B cell (primary cell): ENCODE measurements at regions of chr1 and their contacts with region 1.

Region 1: GRCh38 chr1:151281969-151282882 is at the start of gene ZNF687:
- DNase-seq: peak; percentile 99
- ATAC-seq: peak; percentile 86
- H3K4me3 ChIP-seq: peak within 1 kb of the TSS; percentile 91 to 100 (median 97)
- H3K4me3 Mint-ChIP-seq: peak within 1 kb of the TSS; percentile 98
- H3K27ac ChIP-seq: peak within 1 kb of the TSS; percentile 95 to 96
- H3K27ac Mint-ChIP-seq: peak within 1 kb of the TSS; percentile 96
- H3K4me1 ChIP-seq: peaks cover 24 to 37% of the 10 kb centered on the region in 2 donors
- H3K4me1 Mint-ChIP-seq: peaks cover 45% of the 10 kb centered on the region
- H3K27me3 ChIP-seq: no peaks in the 10 kb centered on the region
- H3K27me3 Mint-ChIP-seq: no peaks in the 10 kb centered on the region
- CTCF ChIP-seq: no peak
- total RNA-seq, gene ZNF687: 49.6 and 54.0 TPM in 2 replicates

Region 2: GRCh38 chr1:151059078-151059907 is 222.9 kb before region 1 on chr1 and contains the start of gene CDC42SE1:
- CTCF ChIA-PET with region 1: no interaction called
- POLR2A ChIA-PET with region 1: no interaction called
- intact Hi-C with region 1: loop called (anchors 5 kb)
- DNase-seq: peak; percentile 92
- ATAC-seq: peak; percentile 85
- H3K4me3 ChIP-seq: peak within 1 kb of the TSS; percentile 87 to 99 (median 97)
- H3K4me3 Mint-ChIP-seq: peak within 1 kb of the TSS; percentile 99
- H3K27ac ChIP-seq: peak within 1 kb of the TSS; percentile 76 to 95
- H3K27ac Mint-ChIP-seq: peak within 1 kb of the TSS; percentile 94
- H3K4me1 ChIP-seq: peaks cover 42 to 46% of the 10 kb centered on the region in 2 donors
- H3K4me1 Mint-ChIP-seq: peaks cover 51% of the 10 kb centered on the region
- H3K27me3 ChIP-seq: no peaks in the 10 kb centered on the region
- H3K27me3 Mint-ChIP-seq: no peaks in the 10 kb centered on the region
- CTCF ChIP-seq: peak; percentile 85
- total RNA-seq, gene CDC42SE1: 230 and 238 TPM in 2 replicates

Region 3: DNA sequence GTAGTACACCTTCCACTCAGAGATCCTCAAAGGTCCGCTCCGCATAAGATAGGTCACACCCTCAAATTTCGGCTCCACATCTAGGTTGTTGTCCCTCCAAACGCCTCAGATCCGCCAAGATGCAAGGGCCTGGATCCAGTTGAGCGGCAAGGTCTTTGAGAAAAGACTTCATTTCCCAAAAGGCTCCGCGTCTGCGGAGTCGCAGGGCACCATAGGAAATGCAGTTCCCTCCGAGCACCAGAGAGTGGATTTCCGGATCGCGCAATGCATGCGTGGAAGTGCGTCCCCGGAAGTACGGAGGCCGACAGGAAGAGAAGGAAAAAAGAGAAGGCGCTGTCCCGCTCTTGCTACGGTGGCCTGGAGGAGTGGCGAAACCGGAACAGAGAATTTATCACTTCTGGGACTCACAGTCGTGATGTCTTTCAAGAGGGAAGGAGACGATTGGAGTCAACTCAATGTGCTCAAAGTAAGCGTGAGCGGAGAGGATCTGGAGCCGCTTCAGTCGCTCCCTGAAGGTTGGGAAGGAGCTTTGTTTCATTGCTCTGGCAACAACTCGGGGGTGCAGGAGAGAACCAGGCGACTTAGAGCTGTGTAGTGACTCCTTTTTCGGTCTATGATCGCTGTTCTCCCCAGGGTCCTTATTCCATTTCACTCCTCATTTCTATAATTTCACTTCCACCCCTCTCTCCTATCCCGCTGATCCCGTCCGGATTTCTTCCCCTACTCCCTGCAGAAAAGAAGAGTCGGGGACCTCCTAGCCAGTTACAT is 116.3 kb before region 1 on chr1 and contains the starts of genes LYSMD1 and SCNM1:
- CTCF ChIA-PET with region 1: no interaction called
- POLR2A ChIA-PET with region 1: no interaction called
- intact Hi-C with region 1: loop called (anchors 1 kb)
- DNase-seq: peak; percentile 99
- ATAC-seq: peak; percentile 98
- H3K4me3 ChIP-seq: peak within 1 kb of the TSS; percentile 81 to 99 (median 92)
- H3K4me3 Mint-ChIP-seq: peak within 1 kb of the TSS; percentile 92
- H3K27ac ChIP-seq: peak within 1 kb of the TSS; percentile 26 to 80
- H3K27ac Mint-ChIP-seq: peak within 1 kb of the TSS; percentile 96
- H3K4me1 ChIP-seq: peaks cover 16 to 22% of the 10 kb centered on the region in 2 donors
- H3K4me1 Mint-ChIP-seq: peaks cover 37% of the 10 kb centered on the region
- H3K27me3 ChIP-seq: no peaks in the 10 kb centered on the region
- H3K27me3 Mint-ChIP-seq: no peaks in the 10 kb centered on the region
- CTCF ChIP-seq: no peak
- total RNA-seq, gene LYSMD1: 5.8 TPM in 2 replicates
- total RNA-seq, gene SCNM1: 53.6 and 57.6 TPM in 2 replicates

Region 4: GRCh38 chr1:151187205-151187604 is 95.0 kb before region 1 on chr1:
- CTCF ChIA-PET with region 1: no interaction called
- POLR2A ChIA-PET with region 1: no interaction called
- intact Hi-C with region 1: no loop called
- DNase-seq: no peak
- ATAC-seq: no peak
- H3K4me3 ChIP-seq: no peak overlapping the region
- H3K4me3 Mint-ChIP-seq: no peak overlapping the region
- H3K27ac ChIP-seq: no peak overlapping the region
- H3K27ac Mint-ChIP-seq: no peak overlapping the region
- H3K4me1 ChIP-seq: peaks cover 13 to 22% of the 10 kb centered on the region in 2 donors
- H3K4me1 Mint-ChIP-seq: peaks cover 26% of the 10 kb centered on the region
- H3K27me3 ChIP-seq: no peaks in the 10 kb centered on the region
- H3K27me3 Mint-ChIP-seq: no peaks in the 10 kb centered on the region
- CTCF ChIP-seq: no peak

Region 5: DNA sequence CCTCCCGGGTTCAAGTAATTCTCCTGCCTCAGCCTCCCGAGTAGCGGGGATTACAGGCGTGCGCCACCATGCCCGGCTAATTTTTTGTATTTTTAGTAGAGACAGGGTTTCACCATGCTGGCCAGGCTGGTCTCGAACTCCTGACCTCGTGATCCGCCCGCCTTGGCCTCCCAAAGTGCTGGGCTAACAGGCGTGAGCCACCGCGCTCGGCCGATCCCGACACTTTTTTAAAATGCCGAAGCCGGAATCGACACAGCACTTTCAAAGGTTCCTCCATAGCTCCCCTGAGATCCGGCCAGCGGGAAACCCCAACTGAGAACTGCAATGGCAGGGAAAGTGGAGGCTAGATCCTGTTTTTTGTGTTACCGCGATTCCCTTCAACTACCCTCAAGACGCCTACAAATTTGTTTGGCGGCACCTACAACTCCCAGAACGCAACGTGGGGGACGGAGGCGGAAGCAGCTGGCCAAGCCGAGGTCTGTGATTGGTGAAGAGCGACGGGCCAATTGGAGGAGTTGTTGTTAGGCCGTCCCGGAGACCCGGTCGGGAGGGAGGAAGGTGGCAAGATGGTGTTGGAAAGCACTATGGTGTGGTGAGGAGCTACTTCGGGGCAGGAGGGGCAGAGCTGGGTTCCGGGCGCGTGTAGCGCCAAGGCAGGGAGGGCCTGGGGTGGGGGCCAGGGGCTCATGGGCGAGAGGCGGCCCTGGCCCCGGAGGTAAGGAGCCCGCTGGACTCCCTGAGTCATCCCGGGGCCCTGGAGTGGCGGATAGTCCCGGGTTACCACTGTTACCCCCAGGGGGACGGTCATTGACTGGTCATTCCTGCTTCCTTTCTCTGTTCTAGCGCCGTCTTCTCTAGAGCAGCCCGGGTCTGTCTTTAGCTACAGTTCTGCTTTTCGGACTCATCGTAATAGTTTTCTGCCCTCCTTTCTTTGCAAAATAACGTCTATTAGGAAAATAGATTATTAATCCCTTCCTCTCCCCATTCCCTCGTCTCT is 27.7 kb before region 1 on chr1 and contains the start of gene PSMD4:
- CTCF ChIA-PET with region 1: interaction called, 12 read pairs
- POLR2A ChIA-PET with region 1: interaction called, 7 read pairs
- intact Hi-C with region 1: loop called (anchors 1 kb)
- DNase-seq: peak; percentile 96
- ATAC-seq: peak; percentile 93
- H3K4me3 ChIP-seq: peak within 1 kb of the TSS; percentile 82 to 97 (median 84)
- H3K4me3 Mint-ChIP-seq: peak within 1 kb of the TSS; percentile 97
- H3K27ac ChIP-seq: peak within 1 kb of the TSS; percentile 66 to 85
- H3K27ac Mint-ChIP-seq: peak within 1 kb of the TSS; percentile 97
- H3K4me1 ChIP-seq: peaks cover 9 to 12% of the 10 kb centered on the region in 2 donors
- H3K4me1 Mint-ChIP-seq: peaks cover 30% of the 10 kb centered on the region
- H3K27me3 ChIP-seq: no peaks in the 10 kb centered on the region
- H3K27me3 Mint-ChIP-seq: no peaks in the 10 kb centered on the region
- CTCF ChIP-seq: no peak
- total RNA-seq, gene PSMD4: 142 and 169 TPM in 2 replicates

Region 6: DNA sequence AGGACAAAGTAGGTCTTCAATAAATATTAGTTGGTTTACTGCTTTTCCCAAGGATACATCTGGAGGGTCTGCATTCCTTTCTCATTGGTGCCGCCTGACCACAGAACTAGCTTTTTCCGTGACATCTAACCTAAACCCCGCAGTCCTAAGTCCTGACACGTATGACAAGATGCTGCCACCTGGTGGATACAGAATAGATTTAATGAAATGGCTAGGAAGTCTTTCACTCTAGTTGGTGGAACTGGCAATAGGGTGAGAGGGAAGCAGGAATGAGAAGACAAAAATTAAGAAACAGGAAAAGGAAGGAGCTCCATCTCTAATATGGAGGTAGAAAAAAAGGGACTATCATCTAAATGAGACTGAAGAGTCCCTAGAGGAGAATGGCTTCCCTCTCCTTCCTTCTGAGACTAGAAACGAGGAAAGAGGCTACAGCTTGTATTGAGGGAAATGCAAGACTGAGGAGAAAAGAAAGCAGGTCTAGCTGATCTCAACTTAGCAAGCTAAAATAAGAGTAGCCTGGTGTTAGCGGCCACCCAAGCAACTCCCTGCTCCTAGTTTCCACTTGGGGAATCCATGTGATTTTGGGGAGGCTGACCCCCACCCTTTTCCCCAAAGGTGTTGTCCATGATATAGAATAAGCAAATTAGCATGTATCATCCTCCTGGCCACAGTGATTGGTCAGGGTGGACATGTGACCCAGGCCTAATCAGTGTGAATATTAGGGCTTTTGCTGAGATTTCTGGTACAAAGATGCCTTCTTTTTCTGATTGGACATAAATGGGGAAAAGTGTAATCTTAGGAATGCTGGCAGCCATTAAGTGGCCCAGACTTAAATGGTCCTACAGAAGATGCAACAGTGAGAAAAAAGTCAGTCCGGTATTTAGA is 58.9 kb after region 1 on chr1:
- CTCF ChIA-PET with region 1: interaction called, 14 read pairs
- POLR2A ChIA-PET with region 1: interaction called, 5 read pairs
- intact Hi-C with region 1: no loop called
- DNase-seq: peak; percentile 82
- ATAC-seq: peak; percentile 83
- H3K4me3 ChIP-seq: no peak overlapping the region
- H3K4me3 Mint-ChIP-seq: no peak overlapping the region
- H3K27ac ChIP-seq: peak overlapping the region; percentile 21 to 99
- H3K27ac Mint-ChIP-seq: peak overlapping the region; percentile 69
- H3K4me1 ChIP-seq: peaks cover 25% of the 10 kb centered on the region in 2 donors
- H3K4me1 Mint-ChIP-seq: peaks cover 38% of the 10 kb centered on the region
- H3K27me3 ChIP-seq: no peaks in the 10 kb centered on the region
- H3K27me3 Mint-ChIP-seq: no peaks in the 10 kb centered on the region
- CTCF ChIP-seq: peak; percentile 85

Region 7: GRCh38 chr1:151399890-151400495 is 117.8 kb after region 1 on chr1:
- CTCF ChIA-PET with region 1: no interaction called
- POLR2A ChIA-PET with region 1: interaction called, 3 read pairs
- intact Hi-C with region 1: loop called (anchors 1 kb)
- DNase-seq: no peak
- ATAC-seq: peak; percentile 7
- H3K4me3 ChIP-seq: peak overlapping the region; percentile 91 to 97 (median 92)
- H3K4me3 Mint-ChIP-seq: peak overlapping the region; percentile 93
- H3K27ac ChIP-seq: peak overlapping the region; percentile 88 to 95
- H3K27ac Mint-ChIP-seq: peak overlapping the region; percentile 95
- H3K4me1 ChIP-seq: peaks cover 8 to 21% of the 10 kb centered on the region in 2 donors
- H3K4me1 Mint-ChIP-seq: peaks cover 26% of the 10 kb centered on the region
- H3K27me3 ChIP-seq: no peaks in the 10 kb centered on the region
- H3K27me3 Mint-ChIP-seq: no peaks in the 10 kb centered on the region
- CTCF ChIP-seq: no peak